ENCODE measurements at regions of chr22 and their contacts with region 1.

Region 1: GRCh38 chr22:38733329-38733723 is 22.5 kb downstream of the SUN2 start:
- DNase-seq: peak; percentile 68
- CTCF ChIP-seq: peak; percentile 61

Region 2: DNA sequence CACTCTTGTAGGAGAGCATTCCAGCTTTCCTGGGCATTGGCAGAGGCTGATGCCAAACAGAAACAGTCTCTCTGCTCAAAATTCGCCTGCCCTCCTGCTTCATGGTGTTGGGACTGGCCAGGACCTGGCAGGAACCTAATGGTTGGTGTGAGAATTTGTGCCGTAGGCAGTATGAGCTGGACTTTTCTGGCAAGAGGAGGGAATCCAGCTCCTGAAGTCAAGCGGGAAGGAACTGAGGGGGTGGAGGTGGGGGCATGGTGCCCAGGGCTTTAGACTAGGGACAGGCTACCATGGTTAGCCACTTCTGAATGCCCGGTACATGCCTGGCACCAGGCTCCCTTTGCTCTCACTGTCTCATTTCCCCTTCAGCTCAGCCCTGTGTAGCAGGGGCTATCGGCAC is 58.4 kb before region 1 on chr22:
- CTCF ChIA-PET with region 1: no interaction called
- POLR2A ChIA-PET with region 1: no interaction called
- DNase-seq: no peak
- CTCF ChIP-seq: no peak

Region 3: DNA sequence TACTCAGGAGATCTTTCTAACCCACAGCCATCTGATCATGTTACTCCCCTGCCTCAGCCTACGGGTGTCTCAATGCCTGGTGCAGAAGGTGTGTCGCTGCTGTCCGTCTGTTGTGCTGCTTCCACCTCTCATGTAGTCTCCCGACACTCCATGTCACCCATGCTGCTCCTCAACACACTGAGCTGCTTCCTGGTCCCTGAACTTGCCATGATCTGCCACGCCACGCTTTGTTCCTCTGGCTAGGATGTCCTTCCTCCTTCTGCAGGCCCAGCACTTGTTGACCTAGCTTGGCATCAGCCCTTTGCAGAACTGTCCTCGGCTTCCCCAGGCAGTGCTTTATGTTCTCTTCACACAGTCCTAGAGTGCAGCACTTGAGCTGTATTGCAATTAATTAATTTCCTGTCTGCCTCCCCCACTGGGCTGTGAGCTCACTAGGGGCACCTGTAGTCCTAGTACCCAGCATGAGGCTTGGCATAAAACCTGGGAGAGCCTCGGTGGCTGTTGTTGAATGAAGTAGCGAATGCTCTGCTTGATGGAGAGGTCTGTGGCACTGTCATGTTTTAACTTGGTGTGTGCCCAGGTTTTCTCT is 18.1 kb before region 1 on chr22:
- CTCF ChIA-PET with region 1: interaction called, 70 read pairs
- POLR2A ChIA-PET with region 1: interaction called, 6 read pairs
- DNase-seq: no peak
- CTCF ChIP-seq: no peak

Region 4: GRCh38 chr22:38744981-38745380 is 11.7 kb after region 1 on chr22:
- CTCF ChIA-PET with region 1: interaction called, 13 read pairs
- POLR2A ChIA-PET with region 1: interaction called, 7 read pairs
- DNase-seq: no peak
- CTCF ChIP-seq: no peak